Heart left ventricle (tissue), 16 donors: ENCODE measurements at regions of chr6 and their contacts with region 1.

Region 1: DNA sequence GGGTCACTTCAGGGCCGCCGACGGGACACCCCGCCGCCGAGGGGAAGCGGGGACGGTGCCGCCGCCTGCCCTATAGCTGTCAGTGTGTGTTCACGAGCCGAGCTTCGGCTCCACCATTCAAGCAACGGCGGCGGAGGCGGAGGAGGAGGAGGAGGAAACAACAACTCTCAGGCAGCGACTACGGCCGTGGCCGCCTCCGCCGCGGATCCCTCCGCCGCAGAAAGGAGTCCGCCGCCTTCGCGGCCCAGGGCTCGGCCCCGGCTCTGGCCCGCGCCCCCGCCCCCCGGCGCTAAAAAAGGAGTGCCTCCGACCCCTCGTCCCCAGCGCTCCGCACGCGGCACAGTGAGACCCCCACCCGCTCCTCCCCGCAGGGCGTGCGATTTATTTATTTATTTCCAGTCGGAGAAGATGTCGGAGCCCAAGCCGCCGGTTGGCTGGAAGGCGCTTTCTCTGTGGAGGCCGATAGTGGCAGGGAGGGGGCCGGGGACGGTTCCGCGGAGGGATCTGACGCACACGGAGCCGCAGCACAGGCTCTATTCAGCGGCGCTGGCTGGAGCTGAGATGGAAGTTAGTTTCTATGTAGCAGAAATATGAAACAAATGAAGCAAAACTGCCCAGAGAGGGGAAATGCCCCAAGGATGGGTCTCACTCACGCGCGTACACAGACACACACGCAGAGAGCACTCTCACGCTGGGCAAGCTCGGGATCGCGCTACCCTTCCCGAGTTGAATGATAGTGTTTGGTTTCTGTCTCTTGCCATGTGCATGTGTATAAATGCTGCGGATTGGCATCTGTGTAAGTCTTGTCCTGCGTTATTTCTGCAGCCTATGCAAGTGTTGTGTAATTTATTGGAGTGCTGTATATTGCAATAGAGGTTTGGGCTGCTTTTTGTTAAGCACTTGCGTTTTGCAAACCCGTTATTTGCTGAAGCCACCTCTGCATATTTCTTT is at the start of gene PHIP:
- DNase-seq: peak; percentile 95 to 96 (median 96)
- ATAC-seq: peak; percentile 91 to 95 (median 92)
- H3K4me3 ChIP-seq: peak within 1 kb of the TSS; percentile 69 to 94 (median 88)
- H3K27ac ChIP-seq: peak within 1 kb of the TSS; percentile 97 to 100 (median 98)
- H3K4me1 ChIP-seq: peaks cover 8 to 43% (median 31%) of the 10 kb centered on the region in 12 donors
- H3K27me3 ChIP-seq: no peaks in the 10 kb centered on the region
- CTCF ChIP-seq: peak in 3 of 12 donors; percentile 8 to 12 (median 8)
- POLR2A ChIP-seq: peak in 1 of 2 donors; percentile 15
- total RNA-seq, gene PHIP: 10.1 to 18.9 (median 15.3) TPM

Region 2: DNA sequence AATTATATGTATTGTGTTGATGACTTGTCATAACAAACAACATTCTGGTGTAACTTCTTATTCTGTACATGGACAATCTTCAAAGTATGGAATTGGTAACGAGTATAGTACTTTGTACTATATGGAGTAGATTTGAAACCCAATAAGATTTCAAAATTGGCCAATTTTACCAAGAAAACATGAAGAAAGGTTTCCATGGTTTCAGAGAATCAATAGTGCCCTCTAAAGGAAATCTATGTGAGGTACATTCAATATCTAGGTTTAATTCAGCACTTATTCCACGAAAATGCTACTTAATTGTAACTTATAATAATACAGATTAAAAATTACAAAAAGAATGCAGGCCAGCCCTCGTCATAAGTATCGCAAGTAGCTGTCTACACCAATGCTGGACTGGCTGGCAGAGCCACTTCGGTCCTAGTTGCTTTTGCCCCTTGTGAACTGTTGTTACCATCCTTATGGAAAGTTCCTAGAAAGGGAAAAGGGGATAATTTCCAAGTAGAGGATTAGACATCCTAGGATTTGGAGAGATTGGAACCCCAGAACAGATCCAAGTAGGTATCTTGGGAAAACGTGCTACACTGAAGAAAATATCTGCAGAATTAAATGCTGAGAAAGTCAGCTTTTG is 388.0 kb after region 1 on chr6:
- intact Hi-C with region 1: loop called in 2 of 10 experiments (anchors 10 kb)
- DNase-seq: no peak
- ATAC-seq: no peak
- H3K4me3 ChIP-seq: no peak overlapping the region
- H3K27ac ChIP-seq: no peak overlapping the region
- H3K4me1 ChIP-seq: peaks cover 0 to 8% (median 0%) of the 10 kb centered on the region in 12 donors
- H3K27me3 ChIP-seq: no peaks in the 10 kb centered on the region
- CTCF ChIP-seq: peak in 11 of 12 donors; percentile 41 to 69 (median 58)
- POLR2A ChIP-seq: no peak

Region 3: DNA sequence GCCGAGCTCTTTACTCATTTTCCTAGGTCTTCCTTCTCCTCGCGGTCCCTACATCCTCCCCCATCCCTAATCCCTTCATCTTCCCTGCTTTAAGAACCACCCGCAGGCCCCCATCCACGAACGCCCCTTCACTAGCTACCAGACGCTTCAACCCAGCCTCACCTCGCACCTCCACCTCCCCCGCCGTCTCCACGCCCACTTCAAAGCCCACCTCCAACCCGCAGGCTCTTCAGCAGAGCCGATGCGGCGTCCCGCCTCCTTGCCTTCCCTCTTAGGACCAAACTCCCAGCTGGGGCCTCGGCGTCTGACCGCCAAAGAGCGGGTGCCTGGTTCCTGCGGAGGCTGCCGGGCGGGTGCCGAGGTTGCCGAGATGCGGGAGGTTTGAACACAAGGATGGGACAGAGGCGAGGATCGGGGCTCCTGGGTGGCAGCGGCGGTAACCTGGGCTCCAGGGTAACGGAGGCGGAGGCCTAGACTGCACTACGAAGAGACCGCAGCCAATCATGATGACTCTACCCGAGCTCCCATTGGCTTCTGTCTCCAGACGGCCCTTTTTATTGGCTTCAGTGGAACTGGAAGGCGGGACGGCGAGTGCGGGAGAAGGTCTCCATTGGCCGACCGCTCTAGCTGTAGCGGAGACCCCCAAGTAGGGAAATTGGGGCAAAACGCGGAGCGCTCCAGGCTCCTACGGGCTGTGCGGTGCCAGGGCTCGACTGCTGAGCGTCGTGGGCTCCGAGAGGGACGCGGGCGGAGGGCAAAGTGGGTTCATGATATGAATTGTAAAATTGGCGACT is 458.8 kb after region 1 on chr6 and contains the start of gene LCA5:
- intact Hi-C with region 1: loop called in 6 of 10 experiments (anchors 5 to 10 kb)
- DNase-seq: peak; percentile 92 to 96 (median 95)
- ATAC-seq: peak; percentile 98 to 100 (median 99)
- H3K4me3 ChIP-seq: peak within 1 kb of the TSS; percentile 61 to 90 (median 80)
- H3K27ac ChIP-seq: peak within 1 kb of the TSS; percentile 61 to 93 (median 86)
- H3K4me1 ChIP-seq: peaks cover 0 to 24% (median 8%) of the 10 kb centered on the region in 12 donors
- H3K27me3 ChIP-seq: no peaks in the 10 kb centered on the region
- CTCF ChIP-seq: no peak
- POLR2A ChIP-seq: peak in 1 of 2 donors; percentile 54
- total RNA-seq, gene LCA5: 1.2 to 3.6 (median 2.2) TPM

Region 4: GRCh38 chr6:79544939-79545450 is 466.6 kb after region 1 on chr6:
- intact Hi-C with region 1: loop called in 2 of 10 experiments (anchors 5 to 10 kb)
- DNase-seq: peak; percentile 57 to 82 (median 66)
- ATAC-seq: peak; percentile 76 to 96 (median 96)
- H3K4me3 ChIP-seq: peak overlapping the region in 9 of 12 donors; percentile 4 to 34 (median 29)
- H3K27ac ChIP-seq: peak overlapping the region in 11 of 12 donors; percentile 33 to 75 (median 54)
- H3K4me1 ChIP-seq: peaks cover 0 to 30% (median 19%) of the 10 kb centered on the region in 12 donors
- H3K27me3 ChIP-seq: no peaks in the 10 kb centered on the region
- CTCF ChIP-seq: peak; percentile 7 to 76 (median 49)
- POLR2A ChIP-seq: no peak

Region 5: DNA sequence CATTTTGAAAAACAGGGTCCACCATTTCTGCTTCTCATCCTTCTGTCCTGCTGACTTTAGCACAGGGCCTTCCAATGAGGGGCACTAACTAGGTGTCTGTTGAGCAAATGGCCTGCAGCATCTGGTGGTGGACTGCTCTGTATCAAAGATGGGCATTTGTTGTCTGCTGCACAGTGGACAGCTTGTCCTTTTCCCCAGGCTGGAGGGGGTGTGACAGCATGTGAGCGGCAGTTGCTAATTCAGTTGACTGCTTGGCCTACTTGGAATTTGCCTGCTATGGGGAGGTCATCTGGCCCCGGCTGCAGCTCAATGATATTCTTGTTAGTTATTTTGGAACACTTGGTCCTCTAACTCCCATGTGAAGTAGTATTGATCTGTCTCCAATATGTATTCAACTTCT is 646.5 kb after region 1 on chr6:
- intact Hi-C with region 1: no loop called
- DNase-seq: peak in 3 of 5 donors; percentile 20 to 49 (median 37)
- ATAC-seq: peak; percentile 92 to 97 (median 95)
- H3K4me3 ChIP-seq: no peak overlapping the region
- H3K27ac ChIP-seq: no peak overlapping the region
- H3K4me1 ChIP-seq: no peaks in the 10 kb centered on the region
- H3K27me3 ChIP-seq: no peaks in the 10 kb centered on the region
- CTCF ChIP-seq: no peak
- POLR2A ChIP-seq: no peak